CD4-positive, alpha-beta T cell (primary cell): ENCODE measurements at regions of chr9 and their contacts with region 1.

Region 1: DNA sequence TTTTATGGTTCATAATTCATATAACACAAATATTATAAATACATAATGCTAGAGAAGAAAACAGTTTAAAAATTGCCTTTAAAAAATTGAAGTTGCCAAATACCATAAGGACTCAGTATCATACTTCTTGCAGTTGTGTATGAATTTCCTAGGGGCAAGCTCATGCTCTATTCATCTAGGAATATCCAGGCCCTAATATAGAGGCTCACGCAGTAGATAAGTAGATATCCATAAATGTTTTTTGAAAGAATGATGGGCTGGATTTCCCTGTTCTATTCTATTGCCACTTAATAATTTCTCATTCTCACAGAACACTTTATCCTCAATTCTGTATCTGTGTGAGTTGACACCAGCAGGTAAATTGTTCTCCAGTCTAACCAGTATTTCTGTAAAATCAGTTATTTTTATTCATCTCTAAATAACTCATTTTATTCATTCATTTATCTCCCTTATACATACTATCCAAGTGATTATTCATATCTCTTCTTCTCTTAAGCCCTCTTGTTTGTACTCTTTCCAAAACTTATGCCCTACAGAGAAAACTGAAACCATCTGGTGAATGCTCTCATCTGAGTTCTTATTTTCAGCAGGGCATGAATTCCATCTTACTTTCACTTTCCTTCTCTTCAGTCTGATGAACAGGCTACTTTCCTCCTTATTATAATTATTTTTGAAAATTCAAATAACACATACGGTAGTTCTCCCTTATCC is 97.1 kb downstream of the SLC44A1 start:
- DNase-seq: peak in 1 of 14 experiments; percentile 19
- ATAC-seq: no peak
- H3K4me3 ChIP-seq: no peak overlapping the region
- H3K4me3 Mint-ChIP-seq: peak overlapping the region; percentile 40
- H3K27ac ChIP-seq: no peak overlapping the region
- H3K27ac Mint-ChIP-seq: no peak overlapping the region
- H3K4me1 ChIP-seq: no peaks in the 10 kb centered on the region
- H3K4me1 Mint-ChIP-seq: peaks cover 18% of the 10 kb centered on the region
- H3K27me3 ChIP-seq: no peaks in the 10 kb centered on the region
- H3K27me3 Mint-ChIP-seq: no peaks in the 10 kb centered on the region
- CTCF ChIP-seq: no peak

Region 2: DNA sequence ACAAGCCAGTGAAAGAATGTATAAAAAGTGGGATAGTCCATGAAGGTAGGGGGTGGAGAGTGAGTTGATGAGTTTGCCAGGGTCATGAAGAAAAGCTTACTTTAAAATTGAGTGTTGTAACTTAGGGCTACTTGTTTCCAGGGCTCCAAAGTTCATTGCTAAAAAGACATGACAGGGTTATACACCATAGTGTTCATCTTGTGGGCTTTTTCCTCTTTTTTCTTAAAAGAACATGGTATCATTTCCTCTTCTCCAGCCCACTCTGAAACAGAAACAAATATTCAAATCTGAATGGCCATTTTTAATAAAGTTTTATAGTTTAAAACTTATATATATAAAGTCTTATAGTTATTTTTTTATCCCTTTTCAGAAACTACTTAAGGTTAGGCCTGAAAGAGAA is 1363.2 kb before region 1 on chr9:
- CTCF ChIA-PET with region 1: no interaction called
- POLR2A ChIA-PET with region 1: no interaction called
- intact Hi-C with region 1: no loop called
- DNase-seq: no peak
- ATAC-seq: no peak
- H3K4me3 ChIP-seq: no peak overlapping the region
- H3K4me3 Mint-ChIP-seq: no peak overlapping the region
- H3K27ac ChIP-seq: no peak overlapping the region
- H3K27ac Mint-ChIP-seq: no peak overlapping the region
- H3K4me1 ChIP-seq: no peaks in the 10 kb centered on the region
- H3K4me1 Mint-ChIP-seq: no peaks in the 10 kb centered on the region
- H3K27me3 ChIP-seq: no peaks in the 10 kb centered on the region
- H3K27me3 Mint-ChIP-seq: no peaks in the 10 kb centered on the region
- CTCF ChIP-seq: no peak

Region 3: GRCh38 chr9:105290398-105290797 is 51.2 kb before region 1 on chr9:
- CTCF ChIA-PET with region 1: no interaction called
- POLR2A ChIA-PET with region 1: no interaction called
- intact Hi-C with region 1: loop called in 1 of 2 experiments (anchors 5 kb)
- DNase-seq: no peak
- ATAC-seq: no peak
- H3K4me3 ChIP-seq: no peak overlapping the region
- H3K4me3 Mint-ChIP-seq: no peak overlapping the region
- H3K27ac ChIP-seq: no peak overlapping the region
- H3K27ac Mint-ChIP-seq: no peak overlapping the region
- H3K4me1 ChIP-seq: no peaks in the 10 kb centered on the region
- H3K4me1 Mint-ChIP-seq: peaks cover 20% of the 10 kb centered on the region
- H3K27me3 ChIP-seq: no peaks in the 10 kb centered on the region
- H3K27me3 Mint-ChIP-seq: no peaks in the 10 kb centered on the region
- CTCF ChIP-seq: no peak